K562 (cell line): ENCODE measurements at regions of chr6 and their contacts with region 1.

Region 1: DNA sequence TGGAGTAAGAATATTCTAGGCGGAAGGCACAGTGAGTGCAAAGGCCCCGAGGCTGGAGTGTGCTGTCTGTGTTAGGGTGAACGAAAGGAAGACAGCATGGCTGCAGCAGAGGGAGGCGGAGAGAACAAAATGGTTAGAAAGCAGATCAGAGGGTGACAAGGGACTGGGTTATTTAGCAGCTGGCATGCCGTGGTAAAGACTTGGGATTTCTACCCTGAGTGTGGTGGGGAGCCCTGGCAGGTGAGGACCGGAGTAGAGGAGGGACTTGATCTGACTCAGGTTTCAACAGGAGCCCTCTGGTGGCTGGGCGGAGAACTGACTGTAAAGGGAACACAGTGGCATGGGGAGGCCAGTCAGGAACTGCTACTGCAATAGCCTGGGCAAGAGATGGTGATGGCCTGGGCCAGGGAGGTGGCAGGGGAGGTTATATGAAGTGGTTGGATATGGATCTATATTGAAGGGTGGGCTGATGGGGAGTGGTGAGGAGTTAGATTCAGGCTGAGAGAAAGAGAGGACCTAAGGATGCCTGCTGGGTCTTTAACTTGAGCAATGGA is 38.0 kb downstream of the PIM1 start:
- DNase-seq: peak; percentile 88 to 97 (median 90)
- ATAC-seq: peak; percentile 83
- H3K4me3 ChIP-seq: no peak overlapping the region
- H3K27ac ChIP-seq: peak overlapping the region; percentile 7; the same call in 2 of the 3 replicates
- H3K4me1 ChIP-seq: peaks cover 60 to 72% of the 10 kb centered on the region in 2 experiments
- H3K27me3 ChIP-seq: no peaks in the 10 kb centered on the region
- CTCF ChIP-seq: peak; percentile 94 to 98 (median 94)
- EP300 ChIP-seq: peak; percentile 34; the same call in 1 of the 2 replicates
- POLR2A ChIP-seq: no peak
- RAD21 ChIP-seq: peak; percentile 95 to 98

Region 2: GRCh38 chr6:36885461-36886401 is 322.2 kb before region 1 on chr6 and contains the start of gene C6orf89:
- CTCF ChIA-PET with region 1: no interaction called
- POLR2A ChIA-PET with region 1: no interaction called
- in situ Hi-C with region 1: no loop called
- intact Hi-C with region 1: loop called (anchors 10 kb)
- DNase-seq: peak; percentile 93 to 100 (median 94)
- ATAC-seq: peak; percentile 93
- H3K4me3 ChIP-seq: peak within 1 kb of the TSS; percentile 64
- H3K27ac ChIP-seq: peak within 1 kb of the TSS; percentile 90
- H3K4me1 ChIP-seq: peaks cover 17 to 37% of the 10 kb centered on the region in 2 experiments; a peak in 4 of 5 replicates
- H3K27me3 ChIP-seq: no peaks in the 10 kb centered on the region
- CTCF ChIP-seq: peak; percentile 81 to 97 (median 95)
- EP300 ChIP-seq: no peak; the same call in 1 of the 2 replicates
- POLR2A ChIP-seq: peak; percentile 91
- RAD21 ChIP-seq: peak; percentile 66 to 69
- polyA plus RNA-seq, gene C6orf89: 35.2 to 41.9 TPM

Region 3: GRCh38 chr6:37051138-37052026 is 156.6 kb before region 1 on chr6:
- CTCF ChIA-PET with region 1: interaction called, 31 read pairs
- POLR2A ChIA-PET with region 1: interaction called, 3 read pairs
- in situ Hi-C with region 1: loop called (anchors 10 kb)
- intact Hi-C with region 1: loop called (anchors 1 kb)
- DNase-seq: peak; percentile 86 to 94 (median 87)
- ATAC-seq: peak; percentile 75
- H3K4me3 ChIP-seq: no peak overlapping the region
- H3K27ac ChIP-seq: peak overlapping the region; percentile 95
- H3K4me1 ChIP-seq: peaks cover 52 to 77% of the 10 kb centered on the region in 2 experiments
- H3K27me3 ChIP-seq: no peaks in the 10 kb centered on the region
- CTCF ChIP-seq: peak; percentile 96 to 97 (median 96)
- EP300 ChIP-seq: peak; percentile 35; the same call in 1 of the 2 replicates
- POLR2A ChIP-seq: no peak
- RAD21 ChIP-seq: peak; percentile 98 to 99

Region 4: DNA sequence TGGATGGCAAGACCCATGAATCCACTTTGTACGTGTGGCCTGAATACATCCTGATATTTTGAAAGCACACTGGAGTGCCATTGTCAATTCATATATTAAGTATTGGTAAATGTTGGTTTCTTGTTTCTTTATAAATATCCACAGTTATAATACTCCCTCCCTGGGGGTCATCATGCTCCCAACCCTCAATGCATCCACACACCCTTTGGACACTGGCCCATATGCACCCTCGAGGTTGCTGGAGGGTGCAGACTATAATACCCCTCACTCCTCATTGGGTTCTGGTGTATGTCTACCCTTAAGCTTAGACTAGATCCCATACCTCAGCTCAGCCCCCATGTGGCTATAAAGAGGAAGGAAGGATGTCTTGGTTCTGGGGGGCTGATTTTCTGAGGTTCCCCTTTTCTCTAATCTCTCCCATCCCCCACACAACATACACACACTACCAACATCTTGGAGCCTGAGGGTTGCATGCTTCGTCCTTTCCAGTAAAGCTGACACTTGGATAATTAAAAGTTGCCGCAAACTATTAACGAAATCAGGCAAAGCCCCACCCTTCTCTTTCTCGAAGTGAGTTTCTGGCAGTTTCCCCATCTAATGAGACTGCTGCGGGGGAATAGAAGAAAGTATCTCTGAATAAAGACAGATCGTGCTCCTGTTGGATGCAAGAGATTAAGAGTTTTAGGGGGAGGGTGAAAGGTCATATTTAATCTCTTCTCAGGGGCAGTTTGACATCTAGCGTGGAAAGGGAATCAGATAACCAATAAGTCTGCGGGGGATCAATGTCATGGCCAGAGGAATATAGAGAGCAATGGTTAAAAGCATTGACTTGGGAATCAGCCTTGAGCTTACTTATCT is 30.7 kb before region 1 on chr6:
- CTCF ChIA-PET with region 1: interaction called, 23 read pairs
- POLR2A ChIA-PET with region 1: interaction called, 67 read pairs
- in situ Hi-C with region 1: loop called (anchors 5 kb)
- intact Hi-C with region 1: loop called (anchors 1 kb)
- DNase-seq: peak; percentile 41 to 83 (median 62)
- ATAC-seq: peak; percentile 59
- H3K4me3 ChIP-seq: no peak overlapping the region
- H3K27ac ChIP-seq: peak overlapping the region; percentile 82
- H3K4me1 ChIP-seq: peaks cover 32 to 52% of the 10 kb centered on the region in 2 experiments
- H3K27me3 ChIP-seq: no peaks in the 10 kb centered on the region
- CTCF ChIP-seq: peak; percentile 43 to 61 (median 53); a peak in 5 of 6 replicates
- EP300 ChIP-seq: peak; percentile 56
- POLR2A ChIP-seq: no peak; the same call in 1 of the 2 replicates
- RAD21 ChIP-seq: peak; percentile 47 to 71

Region 5: GRCh38 chr6:37222125-37222967 is 14.4 kb after region 1 on chr6:
- CTCF ChIA-PET with region 1: no interaction called
- POLR2A ChIA-PET with region 1: interaction called, 10 read pairs
- in situ Hi-C with region 1: no loop called
- intact Hi-C with region 1: no loop called
- DNase-seq: peak; percentile 91 to 95 (median 93)
- ATAC-seq: peak; percentile 99
- H3K4me3 ChIP-seq: peak overlapping the region; percentile 52
- H3K27ac ChIP-seq: no peak overlapping the region
- H3K4me1 ChIP-seq: peaks cover 14 to 22% of the 10 kb centered on the region in 2 experiments; a peak in 4 of 5 replicates
- H3K27me3 ChIP-seq: no peaks in the 10 kb centered on the region
- CTCF ChIP-seq: peak in 2 of 3 experiments; percentile 14 to 44; a peak in 2 of 6 replicates
- EP300 ChIP-seq: no peak; the same call in 1 of the 2 replicates
- POLR2A ChIP-seq: no peak
- RAD21 ChIP-seq: peak; percentile 29 to 43; a peak in 3 of 4 replicates